ENCODE measurements at regions of chr11 and their contacts with region 1.

Region 1: DNA sequence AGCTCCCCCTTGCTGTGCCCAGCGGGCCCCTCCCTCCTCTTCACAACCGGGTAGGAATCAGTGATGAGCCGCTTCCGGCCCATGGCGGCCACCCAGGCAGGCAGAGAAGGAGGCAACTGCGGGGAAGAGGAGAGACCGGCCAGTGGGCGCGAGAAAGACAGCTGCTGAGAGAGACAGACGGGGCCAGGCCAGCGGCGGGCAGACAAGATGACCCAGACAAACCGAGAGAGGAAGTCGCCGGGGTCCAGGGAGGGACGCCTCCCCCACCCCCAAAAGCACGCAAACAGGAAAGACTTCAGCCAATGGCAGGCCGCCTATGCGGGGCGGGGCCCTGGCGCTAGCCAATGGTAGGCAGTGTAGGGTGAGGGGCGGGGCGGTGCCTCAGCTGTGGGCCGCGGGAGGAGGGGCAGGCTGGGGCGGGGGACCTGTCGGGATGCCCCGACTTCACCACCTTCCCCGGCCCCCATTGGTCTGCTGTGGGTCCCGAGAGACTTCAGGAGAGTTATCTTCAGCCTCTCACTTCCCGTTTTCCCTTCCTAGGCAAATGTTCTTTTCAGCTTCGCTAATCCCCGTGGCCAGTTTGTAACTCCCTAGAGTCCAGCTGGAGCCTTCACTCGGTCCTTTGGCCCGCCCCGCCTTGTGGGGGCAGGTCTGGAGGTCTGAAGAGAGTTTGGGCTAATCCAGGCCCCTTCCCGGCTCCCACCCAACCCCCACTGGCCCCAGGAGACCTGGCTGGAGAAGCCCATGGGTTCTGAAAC is at the start of gene POLD4:
- DNase-seq: peak; percentile 90 to 98 (median 94)
- ATAC-seq: peak; percentile 85 to 89
- H3K4me3 Mint-ChIP-seq: peak within 1 kb of the TSS; percentile 93 to 100 (median 97)
- H3K27ac Mint-ChIP-seq: peak within 1 kb of the TSS; percentile 98 to 100 (median 99)
- H3K4me1 Mint-ChIP-seq: peaks cover 22 to 85% (median 58%) of the 10 kb centered on the region in 4 donors
- H3K27me3 Mint-ChIP-seq: no peaks in the 10 kb centered on the region
- polyA plus RNA-seq, gene POLD4: 87.7 to 105 (median 102) TPM

Region 2: GRCh38 chr11:67265633-67266423 is 87.7 kb before region 1 on chr11:
- POLR2A ChIA-PET with region 1: interaction called, 37 read pairs
- DNase-seq: peak; percentile 57 to 84 (median 79)
- ATAC-seq: peak; percentile 43 to 49
- H3K4me3 Mint-ChIP-seq: peak overlapping the region; percentile 74 to 98 (median 81)
- H3K27ac Mint-ChIP-seq: peak overlapping the region; percentile 70 to 90 (median 88)
- H3K4me1 Mint-ChIP-seq: peaks cover 36 to 67% (median 65%) of the 10 kb centered on the region in 4 donors
- H3K27me3 Mint-ChIP-seq: no peaks in the 10 kb centered on the region

Region 3: DNA sequence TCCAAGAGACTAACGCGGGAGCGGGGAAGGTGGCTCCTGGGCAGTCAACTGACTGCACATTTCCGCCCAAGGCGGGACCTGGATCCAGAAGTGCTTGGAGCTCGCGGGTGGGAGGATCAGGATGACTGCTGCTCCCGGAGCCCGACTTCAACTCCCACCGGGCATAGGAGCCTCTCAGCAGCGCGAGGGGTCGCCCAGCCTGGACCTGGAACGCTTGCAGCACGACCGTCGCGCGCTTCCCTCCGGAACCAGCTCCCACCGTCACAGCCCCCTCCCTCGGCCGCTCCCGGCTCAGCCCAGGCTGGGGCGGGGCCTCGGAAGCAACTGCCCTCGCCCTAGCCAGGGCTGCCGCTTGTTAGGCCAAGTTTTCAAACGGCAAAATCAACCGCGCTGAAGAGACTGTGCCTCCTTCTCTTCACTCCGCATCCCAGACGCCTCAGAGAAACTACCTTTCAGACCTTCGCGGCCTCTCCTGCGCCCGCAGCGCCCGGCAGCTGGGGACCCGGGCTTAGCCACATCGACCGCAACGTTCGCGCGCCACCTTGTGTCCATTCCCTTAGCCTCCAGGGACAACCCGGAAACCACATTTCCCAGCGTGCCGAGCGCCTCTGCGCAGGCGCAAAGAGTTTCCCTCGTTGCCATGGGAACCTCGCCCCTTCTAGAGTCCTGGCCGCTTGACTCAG is 36.1 kb before region 1 on chr11:
- POLR2A ChIA-PET with region 1: interaction called, 16 read pairs
- DNase-seq: peak; percentile 92 to 99 (median 98)
- ATAC-seq: peak; percentile 88 to 89
- H3K4me3 Mint-ChIP-seq: peak overlapping the region; percentile 93 to 100 (median 99)
- H3K27ac Mint-ChIP-seq: peak overlapping the region; percentile 89 to 98 (median 96)
- H3K4me1 Mint-ChIP-seq: peaks cover 22 to 54% (median 40%) of the 10 kb centered on the region in 4 donors
- H3K27me3 Mint-ChIP-seq: no peaks in the 10 kb centered on the region

Region 4: GRCh38 chr11:67391304-67392132 is 38.0 kb after region 1 on chr11 and contains the start of gene RAD9A:
- POLR2A ChIA-PET with region 1: interaction called, 493 read pairs
- DNase-seq: peak; percentile 85 to 95 (median 90)
- ATAC-seq: peak; percentile 81 to 84
- H3K4me3 Mint-ChIP-seq: peak within 1 kb of the TSS; percentile 81 to 90 (median 87)
- H3K27ac Mint-ChIP-seq: peak within 1 kb of the TSS; percentile 68 to 93 (median 88)
- H3K4me1 Mint-ChIP-seq: peaks cover 30 to 47% (median 43%) of the 10 kb centered on the region in 4 donors
- H3K27me3 Mint-ChIP-seq: no peaks in the 10 kb centered on the region
- polyA plus RNA-seq, gene RAD9A: 6.5 to 9.4 (median 6.6) TPM

Region 5: DNA sequence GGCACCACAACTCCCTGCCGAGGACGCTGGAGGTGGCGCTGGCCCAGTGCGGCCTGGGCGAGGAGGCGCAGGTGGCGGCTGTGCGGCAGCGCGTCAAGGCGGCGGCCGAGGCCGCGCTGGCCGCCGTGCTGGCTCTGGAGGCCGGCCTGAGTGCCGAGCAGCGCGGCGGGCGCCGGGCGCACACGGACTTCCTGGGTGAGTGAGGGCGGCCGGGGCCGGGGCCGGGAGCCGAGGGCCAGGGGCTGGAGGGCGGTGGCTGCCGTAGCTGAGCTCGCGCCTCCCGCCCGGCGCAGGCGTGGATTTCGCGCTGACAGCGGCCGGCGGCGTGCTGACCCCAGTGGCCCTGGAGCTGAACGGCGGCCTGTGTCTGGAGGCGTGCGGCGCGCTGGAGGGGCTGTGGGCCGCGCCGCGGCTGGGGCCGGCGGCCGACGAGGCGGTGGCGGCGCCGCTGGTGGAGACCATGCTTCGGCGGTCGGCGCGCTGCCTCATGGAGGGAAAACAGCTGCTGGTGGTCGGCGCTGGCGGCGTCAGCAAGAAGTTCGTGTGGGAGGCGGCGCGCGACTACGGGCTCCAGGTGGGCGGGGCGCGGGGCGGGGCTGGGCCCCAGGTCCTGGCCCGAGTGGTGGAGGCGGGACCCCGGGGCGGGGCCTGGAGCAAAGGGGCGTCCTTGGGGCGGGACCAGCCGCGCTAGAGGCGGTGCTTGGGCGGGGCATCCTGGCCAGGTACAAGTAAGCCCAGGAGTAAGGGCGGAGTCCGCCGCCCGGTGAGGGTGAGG is 67.3 kb after region 1 on chr11:
- POLR2A ChIA-PET with region 1: interaction called, 40 read pairs
- DNase-seq: peak; percentile 97 to 100 (median 99)
- ATAC-seq: peak; percentile 64 to 76
- H3K4me3 Mint-ChIP-seq: peak overlapping the region; percentile 76 to 94 (median 86)
- H3K27ac Mint-ChIP-seq: peak overlapping the region; percentile 80 to 100 (median 93)
- H3K4me1 Mint-ChIP-seq: peaks cover 23 to 67% (median 58%) of the 10 kb centered on the region in 4 donors
- H3K27me3 Mint-ChIP-seq: no peaks in the 10 kb centered on the region

Measured in naive thymus-derived CD8-positive, alpha-beta T cell (primary cell).